PC-9 (cell line): ENCODE measurements at regions of chr3 and their contacts with region 1.

Region 1: GRCh38 chr3:147616998-147617619 is 207.9 kb downstream of the ZIC1 start:
- DNase-seq: no peak
- H3K4me3 ChIP-seq: no peak overlapping the region
- H3K27ac ChIP-seq: no peak overlapping the region
- H3K4me1 ChIP-seq: no peaks in the 10 kb centered on the region
- H3K27me3 ChIP-seq: no peaks in the 10 kb centered on the region
- CTCF ChIP-seq: peak; percentile 67

Region 2: DNA sequence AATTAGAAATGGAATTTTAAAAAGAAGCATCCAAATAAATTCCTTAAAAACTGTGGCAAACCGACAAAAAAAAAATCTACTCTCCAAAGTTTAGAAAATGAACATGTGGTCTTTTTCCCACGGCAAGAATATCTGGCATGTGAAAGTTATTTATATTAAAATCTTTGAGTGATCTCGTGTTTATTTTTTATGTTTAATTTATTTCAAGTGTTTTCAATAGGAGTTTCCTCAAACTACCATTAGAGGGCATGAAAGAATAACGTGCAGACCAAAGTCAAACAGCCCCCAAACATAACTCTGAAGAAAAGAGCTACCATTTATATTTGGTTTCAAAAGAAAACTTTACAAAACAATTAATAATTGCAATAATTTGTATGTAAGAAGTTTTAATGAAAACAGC is 497.1 kb before region 1 on chr3:
- CTCF ChIA-PET with region 1: no interaction called
- POLR2A ChIA-PET with region 1: no interaction called
- intact Hi-C with region 1: loop called (anchors 5 kb)
- DNase-seq: no peak
- H3K4me3 ChIP-seq: no peak overlapping the region
- H3K27ac ChIP-seq: no peak overlapping the region
- H3K4me1 ChIP-seq: no peaks in the 10 kb centered on the region
- H3K27me3 ChIP-seq: no peaks in the 10 kb centered on the region
- CTCF ChIP-seq: peak; percentile 57

Region 3: GRCh38 chr3:147361454-147362420 is 255.4 kb before region 1 on chr3:
- CTCF ChIA-PET with region 1: no interaction called
- POLR2A ChIA-PET with region 1: no interaction called
- intact Hi-C with region 1: loop called (anchors 10 kb)
- DNase-seq: peak in 1 of 2 experiments; percentile 30
- H3K4me3 ChIP-seq: no peak overlapping the region
- H3K27ac ChIP-seq: no peak overlapping the region
- H3K4me1 ChIP-seq: no peaks in the 10 kb centered on the region
- H3K27me3 ChIP-seq: no peaks in the 10 kb centered on the region
- CTCF ChIP-seq: peak; percentile 69